ENCODE measurements at regions of chr20 and their contacts with region 1.

Region 1: DNA sequence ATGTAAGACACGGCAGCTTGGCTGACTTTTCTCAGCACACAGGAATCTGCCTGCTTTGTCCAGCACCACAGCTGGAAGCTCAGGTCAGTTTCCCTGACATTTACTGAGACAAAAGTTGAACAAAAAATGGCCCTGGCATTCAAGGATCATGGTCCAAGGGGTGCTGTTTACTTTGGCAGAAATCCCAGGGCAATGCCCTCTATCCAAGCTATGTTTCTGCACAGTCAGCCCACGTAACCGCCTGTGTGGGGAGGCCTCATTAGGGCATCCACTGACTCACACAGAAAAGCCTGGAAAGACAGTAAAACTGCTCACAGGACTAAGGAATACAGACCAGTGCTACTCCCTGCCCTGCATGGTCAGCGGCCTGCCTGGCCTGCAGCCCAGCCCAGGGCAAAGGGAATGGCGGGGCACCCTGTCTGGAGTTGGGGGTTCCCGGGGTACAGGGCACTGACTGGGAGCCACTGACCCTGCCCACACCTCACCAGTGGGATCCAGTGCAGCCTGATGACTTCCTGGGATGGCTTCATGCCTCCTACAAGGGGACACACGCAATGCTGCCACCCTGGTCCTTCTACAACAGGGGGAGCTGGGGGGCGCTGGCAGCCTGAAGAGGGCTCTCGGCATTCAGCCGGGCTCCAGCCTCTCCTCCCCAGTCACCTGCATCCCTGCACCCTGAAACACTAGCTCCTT is 77.1 kb downstream of the NINL start:
- DNase-seq: peak; percentile 100
- ATAC-seq: peak; percentile 96
- H3K4me3 ChIP-seq: peak overlapping the region in 1 of 3 experiments; percentile 59; a peak in 2 of 6 replicates
- H3K27ac ChIP-seq: peak overlapping the region; percentile 90
- H3K4me1 ChIP-seq: peaks cover 29% of the 10 kb centered on the region
- H3K27me3 ChIP-seq: no peaks in the 10 kb centered on the region
- CTCF ChIP-seq: no peak; the same call in 1 of the 2 replicates
- EP300 ChIP-seq: peak; percentile 96 to 98
- POLR2A ChIP-seq: peak; percentile 44 to 71; a peak in 3 of 4 replicates
- RAD21 ChIP-seq: peak; percentile 54

Region 2: DNA sequence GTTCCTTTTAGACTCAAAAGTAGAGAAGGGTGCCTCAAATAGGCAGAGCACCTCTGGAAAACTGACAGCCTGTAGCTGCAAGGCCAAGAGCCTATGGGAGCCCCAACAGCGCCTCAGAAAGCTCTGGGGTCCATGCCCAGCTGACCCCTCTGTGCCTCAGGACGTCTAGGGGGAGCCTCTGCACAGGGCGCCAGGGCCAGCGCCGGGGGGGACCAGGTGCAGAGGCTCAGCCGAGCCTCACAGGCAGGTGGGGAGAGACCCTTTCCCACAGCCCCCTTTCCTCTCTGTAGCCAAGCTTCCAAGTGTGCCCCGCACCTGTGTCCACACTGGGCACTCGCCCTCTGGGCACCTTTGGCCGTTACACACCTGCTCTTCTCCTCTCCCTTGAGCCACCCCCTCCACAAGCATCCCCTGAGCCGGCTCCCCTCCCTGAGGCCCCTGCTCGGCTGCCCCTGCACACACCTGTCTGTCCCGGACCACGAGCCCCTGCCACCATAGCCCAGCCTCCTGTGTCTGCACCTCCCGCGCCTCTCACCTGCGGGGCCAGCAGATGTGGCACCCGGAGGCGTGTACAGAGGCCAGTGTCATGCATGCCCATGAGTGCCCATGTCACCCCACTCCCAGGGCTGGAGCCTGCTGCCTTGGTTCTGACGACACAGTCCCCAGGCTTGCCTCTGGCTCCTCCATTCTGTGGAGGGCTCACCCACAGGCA is 47.5 kb before region 1 on chr20:
- CTCF ChIA-PET with region 1: no interaction called
- POLR2A ChIA-PET with region 1: no interaction called
- in situ Hi-C with region 1: no loop called
- intact Hi-C with region 1: loop called (anchors 1 kb)
- DNase-seq: no peak
- ATAC-seq: peak; percentile 13
- H3K4me3 ChIP-seq: no peak overlapping the region
- H3K27ac ChIP-seq: no peak overlapping the region
- H3K4me1 ChIP-seq: no peaks in the 10 kb centered on the region
- H3K27me3 ChIP-seq: no peaks in the 10 kb centered on the region
- CTCF ChIP-seq: no peak
- EP300 ChIP-seq: no peak
- POLR2A ChIP-seq: no peak
- RAD21 ChIP-seq: no peak

Region 3: GRCh38 chr20:25525295-25526266 is 17.4 kb after region 1 on chr20:
- CTCF ChIA-PET with region 1: no interaction called
- POLR2A ChIA-PET with region 1: interaction called, 36 read pairs
- in situ Hi-C with region 1: no loop called
- intact Hi-C with region 1: loop called (anchors 1 kb)
- DNase-seq: peak; percentile 97
- ATAC-seq: peak; percentile 98
- H3K4me3 ChIP-seq: no peak overlapping the region
- H3K27ac ChIP-seq: peak overlapping the region; percentile 50
- H3K4me1 ChIP-seq: peaks cover 44% of the 10 kb centered on the region
- H3K27me3 ChIP-seq: no peaks in the 10 kb centered on the region
- CTCF ChIP-seq: no peak
- EP300 ChIP-seq: peak; percentile 29 to 76; a peak in 2 of 4 replicates
- POLR2A ChIP-seq: no peak
- RAD21 ChIP-seq: 0 out of 2 replicates have a peak, but pooled peaks have one; percentile 8

Region 4: DNA sequence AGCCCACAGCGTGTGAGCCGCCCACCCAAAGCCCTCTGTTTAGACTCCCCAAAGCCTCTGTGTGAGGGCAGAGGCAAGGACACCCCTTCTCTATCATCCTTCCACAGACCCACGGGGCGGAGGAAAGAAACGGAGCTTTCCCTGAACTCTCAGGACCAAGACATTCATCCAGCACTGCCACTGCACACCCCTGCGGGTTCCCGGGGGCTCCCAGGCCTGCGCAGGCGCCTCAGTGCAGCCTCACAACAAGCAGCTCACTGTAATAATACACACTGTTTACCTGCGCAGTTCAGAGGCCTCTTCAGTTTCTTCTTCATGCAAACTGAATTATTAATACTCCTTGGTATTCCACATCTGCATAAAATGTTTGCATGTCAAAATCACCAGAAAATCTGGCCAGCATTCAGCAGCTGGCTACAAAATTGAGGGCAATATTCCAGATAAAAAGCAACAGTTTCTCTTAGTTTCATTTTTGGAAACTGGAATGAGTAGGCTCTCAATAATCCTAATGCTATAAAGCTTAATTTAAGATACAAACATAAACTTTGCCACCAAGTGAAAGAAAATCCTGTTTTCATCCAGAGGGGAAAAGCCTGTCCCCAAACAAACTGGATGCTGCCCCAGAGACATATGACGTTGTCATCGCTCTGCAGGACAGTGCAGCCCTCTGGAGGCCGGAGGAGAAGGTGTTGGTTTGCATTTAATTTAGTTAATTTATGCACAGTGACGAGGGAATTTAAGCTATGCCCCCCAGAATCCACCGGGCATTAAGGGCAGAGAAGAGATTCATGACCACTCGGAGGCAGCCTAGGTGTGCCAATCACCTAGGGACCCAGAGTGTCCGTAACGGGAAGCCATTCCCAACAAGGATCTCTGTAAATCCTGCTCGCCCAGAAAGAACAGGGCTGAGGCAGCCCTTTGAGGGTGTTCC is 31.8 kb after region 1 on chr20:
- CTCF ChIA-PET with region 1: no interaction called
- POLR2A ChIA-PET with region 1: interaction called, 33 read pairs
- in situ Hi-C with region 1: no loop called
- intact Hi-C with region 1: loop called (anchors 1 kb)
- DNase-seq: no peak
- ATAC-seq: peak; percentile 17
- H3K4me3 ChIP-seq: peak overlapping the region in 1 of 3 experiments; percentile 44; a peak in 1 of 6 replicates
- H3K27ac ChIP-seq: peak overlapping the region; percentile 59
- H3K4me1 ChIP-seq: peaks cover 73% of the 10 kb centered on the region
- H3K27me3 ChIP-seq: no peaks in the 10 kb centered on the region
- CTCF ChIP-seq: peak; percentile 53
- EP300 ChIP-seq: no peak
- POLR2A ChIP-seq: no peak
- RAD21 ChIP-seq: peak; percentile 47; the same call in 1 of the 2 replicates

Region 5: GRCh38 chr20:25574425-25574824 is 66.2 kb after region 1 on chr20:
- CTCF ChIA-PET with region 1: no interaction called
- POLR2A ChIA-PET with region 1: interaction called, 9 read pairs
- in situ Hi-C with region 1: no loop called
- intact Hi-C with region 1: loop called (anchors 2 kb)
- DNase-seq: peak; percentile 63
- ATAC-seq: peak; percentile 22
- H3K4me3 ChIP-seq: no peak overlapping the region
- H3K27ac ChIP-seq: no peak overlapping the region
- H3K4me1 ChIP-seq: peaks cover 66% of the 10 kb centered on the region
- H3K27me3 ChIP-seq: no peaks in the 10 kb centered on the region
- CTCF ChIP-seq: peak; percentile 80
- EP300 ChIP-seq: no peak
- POLR2A ChIP-seq: no peak
- RAD21 ChIP-seq: peak; percentile 59; the same call in 1 of the 2 replicates

Region 6: GRCh38 chr20:25623736-25624499 is 115.7 kb after region 1 on chr20 and contains the start of gene NANP:
- CTCF ChIA-PET with region 1: no interaction called
- POLR2A ChIA-PET with region 1: interaction called, 6 read pairs
- in situ Hi-C with region 1: no loop called
- intact Hi-C with region 1: loop called (anchors 1 kb)
- DNase-seq: peak; percentile 100
- ATAC-seq: peak; percentile 91
- H3K4me3 ChIP-seq: peak within 1 kb of the TSS; percentile 75 to 87 (median 80)
- H3K27ac ChIP-seq: peak within 1 kb of the TSS; percentile 96
- H3K4me1 ChIP-seq: peaks cover 51% of the 10 kb centered on the region
- H3K27me3 ChIP-seq: no peaks in the 10 kb centered on the region; a peak in 1 of 5 replicates
- CTCF ChIP-seq: peak; percentile 65
- EP300 ChIP-seq: peak in 1 of 2 experiments; percentile 30; a peak in 2 of 4 replicates
- POLR2A ChIP-seq: peak; percentile 97 to 98
- RAD21 ChIP-seq: peak; percentile 62
- total RNA-seq, gene NANP: 21.5 and 31.0 TPM in 2 replicates

Region 7: GRCh38 chr20:25696384-25697131 is 188.3 kb after region 1 on chr20 and contains the start of gene ZNF337:
- CTCF ChIA-PET with region 1: no interaction called
- POLR2A ChIA-PET with region 1: interaction called, 4 read pairs
- in situ Hi-C with region 1: no loop called
- intact Hi-C with region 1: loop called (anchors 10 kb)
- DNase-seq: peak; percentile 98
- ATAC-seq: peak; percentile 97
- H3K4me3 ChIP-seq: peak within 1 kb of the TSS; percentile 89 to 100 (median 94)
- H3K27ac ChIP-seq: peak within 1 kb of the TSS; percentile 87
- H3K4me1 ChIP-seq: peaks cover 34% of the 10 kb centered on the region
- H3K27me3 ChIP-seq: no peaks in the 10 kb centered on the region
- CTCF ChIP-seq: peak; percentile 86
- EP300 ChIP-seq: no peak; a peak in 2 of 4 replicates
- POLR2A ChIP-seq: peak; percentile 87 to 90
- RAD21 ChIP-seq: peak; percentile 92
- total RNA-seq, gene ZNF337: 19.0 and 19.6 TPM in 2 replicates

Measured in HepG2 (cell line).